Sciatic nerve (tissue), 2 donors: ENCODE measurements at regions of chr4 and their contacts with region 1.

Region 1: DNA sequence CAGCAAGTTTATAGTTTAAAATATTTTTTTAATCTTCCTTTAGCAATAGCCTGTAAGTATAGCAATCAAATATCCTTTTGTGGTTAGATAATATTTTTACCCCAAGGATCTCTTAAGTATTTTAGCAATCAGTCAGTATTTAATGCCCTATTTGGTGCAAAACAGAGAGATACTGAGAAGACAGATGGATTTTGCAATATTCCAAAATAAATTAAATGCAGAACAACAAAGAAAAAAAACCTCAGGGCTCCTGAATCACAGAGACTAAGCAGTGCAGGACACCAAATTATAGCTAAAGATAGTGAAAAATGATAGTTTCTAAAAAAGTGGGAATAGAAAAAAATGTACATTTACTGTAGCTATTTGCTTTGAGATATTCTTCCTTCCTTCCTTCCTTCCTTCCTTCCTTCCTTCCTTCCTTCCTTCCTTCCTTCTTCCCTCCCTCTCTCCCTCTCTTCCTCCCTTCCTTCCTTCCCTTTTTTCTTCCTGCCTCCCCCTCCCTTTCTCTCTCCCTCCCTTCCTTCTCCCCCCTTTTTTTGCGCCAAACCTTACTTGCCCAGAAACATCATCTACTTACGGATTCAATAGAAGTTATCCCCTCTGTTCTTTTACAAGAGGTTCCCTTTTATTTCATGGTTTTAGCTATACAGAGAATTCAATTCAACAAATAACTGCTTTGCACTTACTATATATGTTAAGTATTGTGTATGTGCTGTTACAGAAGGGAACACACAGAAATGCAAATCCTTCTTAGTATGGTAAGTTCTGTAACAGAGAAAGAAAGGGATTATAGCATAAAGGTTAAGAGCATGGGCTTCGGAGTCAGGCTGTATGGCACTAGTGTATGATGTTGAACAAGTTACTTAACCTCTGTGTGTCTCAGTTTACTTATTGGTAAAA is 219.0 kb downstream of the CPE start:
- DNase-seq: no peak
- ATAC-seq: no peak

Region 2: GRCh38 chr4:165627127-165627526 is 29.3 kb after region 1 on chr4:
- intact Hi-C with region 1: loop called (anchors 1 kb)
- DNase-seq: no peak
- ATAC-seq: no peak

Region 3: DNA sequence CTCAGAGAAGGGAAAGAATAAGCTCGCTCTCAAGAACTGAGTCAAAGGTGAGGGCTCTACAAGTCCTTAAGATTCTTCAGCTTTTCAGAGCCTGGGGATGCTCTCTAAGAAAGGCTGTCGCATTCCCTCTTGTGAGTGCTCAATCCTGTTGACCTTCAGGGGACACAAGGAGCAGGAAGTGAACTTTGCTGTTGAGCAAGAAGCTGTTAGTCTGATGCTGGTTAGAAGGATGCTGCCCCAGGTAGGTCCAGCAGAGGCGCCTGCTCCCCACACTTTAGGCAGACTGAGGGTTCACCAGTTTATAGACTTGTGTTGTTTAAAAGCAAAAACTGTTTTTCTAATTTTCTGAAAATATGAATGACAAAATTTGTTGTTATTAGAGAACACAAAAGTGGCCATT is 1761.9 kb after region 1 on chr4:
- intact Hi-C with region 1: no loop called
- DNase-seq: no peak
- ATAC-seq: no peak